Right ventricle myocardium inferior (tissue), 1 donor: ENCODE measurements at regions of chr20 and their contacts with region 1.

Region 1: GRCh38 chr20:3820048-3820900 is at the start of gene AP5S1:
- DNase-seq: peak; percentile 99
- ATAC-seq: peak; percentile 95
- total RNA-seq, gene AP5S1: 9.8 TPM

Region 2: DNA sequence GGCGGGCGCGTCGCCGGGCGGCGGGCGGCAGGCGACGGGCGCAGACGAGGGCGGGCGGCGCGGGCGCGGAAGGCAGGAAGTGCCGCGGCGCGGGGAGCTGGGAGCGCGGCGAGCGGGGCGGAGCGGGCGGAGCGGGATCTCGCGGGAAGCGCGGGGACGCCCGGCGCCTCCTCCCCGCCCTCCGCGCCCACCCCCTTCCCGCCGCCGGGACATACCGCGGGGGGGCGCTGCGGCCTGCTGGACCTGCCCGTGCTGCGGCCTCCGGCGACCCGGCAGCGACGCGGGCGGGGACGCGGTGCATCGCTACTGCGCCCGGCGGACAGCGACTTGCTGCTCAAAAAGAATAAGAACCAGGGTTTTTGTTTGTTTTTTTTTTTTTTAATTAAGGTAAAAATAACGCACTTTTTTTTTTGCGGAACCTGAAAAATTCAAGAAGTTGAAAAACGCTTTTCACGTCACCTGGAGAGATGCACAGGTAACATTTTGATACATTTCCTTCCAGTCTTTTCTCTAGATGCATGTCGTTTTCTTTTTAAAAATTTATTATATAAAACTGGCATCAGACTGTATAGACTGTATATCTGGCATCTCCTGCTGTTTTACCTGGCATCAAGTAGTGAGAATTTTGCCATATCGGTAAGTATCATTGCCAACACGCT is 33.5 kb before region 1 on chr20 and contains the start of gene CENPB:
- intact Hi-C with region 1: loop called (anchors 1 kb)
- DNase-seq: peak; percentile 93
- ATAC-seq: peak; percentile 96
- total RNA-seq, gene CENPB: 68.2 TPM

Region 3: GRCh38 chr20:3795511-3796468 is 24.5 kb before region 1 on chr20 and contains the start of gene CDC25B:
- intact Hi-C with region 1: loop called (anchors 2 kb)
- DNase-seq: peak; percentile 97
- ATAC-seq: peak; percentile 95
- total RNA-seq, gene CDC25B: 10.1 TPM

Region 4: GRCh38 chr20:3846740-3847428 is 26.6 kb after region 1 on chr20 and contains the start of gene MAVS:
- intact Hi-C with region 1: loop called (anchors 2 kb)
- DNase-seq: peak; percentile 96
- ATAC-seq: peak; percentile 98
- total RNA-seq, gene MAVS: 35.0 TPM

Region 5: GRCh38 chr20:4306206-4306605 is 485.9 kb after region 1 on chr20:
- intact Hi-C with region 1: no loop called
- DNase-seq: no peak
- ATAC-seq: no peak